ENCODE measurements at regions of chr1 and their contacts with region 1.

Region 1: GRCh38 chr1:244047621-244048471 is 3.2 kb upstream of the ZBTB18 start:
- DNase-seq: peak; percentile 99
- ATAC-seq: peak; percentile 75
- H3K4me3 ChIP-seq: peak overlapping the region; percentile 71 to 93 (median 82)
- H3K4me3 Mint-ChIP-seq: peak overlapping the region; percentile 94
- H3K27ac ChIP-seq: peak overlapping the region; percentile 99
- H3K27ac Mint-ChIP-seq: peak overlapping the region; percentile 99
- H3K4me1 ChIP-seq: peaks cover 25 to 38% of the 10 kb centered on the region in 2 donors
- H3K4me1 Mint-ChIP-seq: peaks cover 19% of the 10 kb centered on the region
- H3K27me3 ChIP-seq: no peaks in the 10 kb centered on the region
- H3K27me3 Mint-ChIP-seq: no peaks in the 10 kb centered on the region
- CTCF ChIP-seq: no peak

Region 2: DNA sequence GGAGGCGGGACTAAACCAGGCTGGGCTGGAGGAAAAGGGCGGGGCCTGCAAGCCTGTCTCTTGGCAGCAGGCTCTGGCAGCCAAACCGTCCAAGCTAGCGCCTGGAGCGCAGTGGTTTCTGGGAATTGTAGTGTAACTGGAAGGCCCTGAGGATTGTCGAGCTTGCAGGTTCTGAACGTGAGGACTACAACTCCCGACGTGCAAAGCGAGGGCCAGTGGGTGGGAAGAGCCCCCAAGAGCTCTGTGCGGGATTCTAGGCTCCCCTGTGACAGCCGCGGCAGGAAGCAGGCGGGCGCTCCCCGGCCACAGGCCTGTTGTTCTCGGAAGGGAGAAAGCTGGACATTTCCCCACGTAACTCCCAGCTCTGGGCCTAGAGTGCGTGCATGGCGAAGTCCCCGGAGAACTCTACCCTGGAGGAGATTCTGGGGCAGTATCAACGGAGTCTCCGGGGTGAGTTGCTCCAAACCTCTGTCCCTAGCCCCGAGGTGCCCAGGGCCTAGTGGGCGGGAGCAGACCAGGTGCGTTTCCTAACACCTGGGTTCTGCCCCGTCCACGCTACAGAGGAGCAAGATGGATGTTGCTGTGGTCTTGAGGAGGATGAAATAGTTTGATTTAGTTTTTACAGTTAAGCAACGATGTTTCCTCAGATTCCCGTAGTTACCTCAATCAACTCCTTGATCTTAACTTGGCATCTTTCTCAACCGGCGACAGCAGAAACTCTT is 791.9 kb before region 1 on chr1 and contains the start of gene SDCCAG8:
- CTCF ChIA-PET with region 1: no interaction called
- POLR2A ChIA-PET with region 1: interaction called, 5 read pairs
- intact Hi-C with region 1: loop called (anchors 1 kb)
- DNase-seq: peak; percentile 98
- ATAC-seq: peak; percentile 77
- H3K4me3 ChIP-seq: peak within 1 kb of the TSS; percentile 75 to 100 (median 94)
- H3K4me3 Mint-ChIP-seq: peak within 1 kb of the TSS; percentile 97
- H3K27ac ChIP-seq: peak within 1 kb of the TSS; percentile 97 to 99
- H3K27ac Mint-ChIP-seq: peak within 1 kb of the TSS; percentile 99
- H3K4me1 ChIP-seq: peaks cover 19 to 29% of the 10 kb centered on the region in 2 donors
- H3K4me1 Mint-ChIP-seq: peaks cover 45% of the 10 kb centered on the region
- H3K27me3 ChIP-seq: no peaks in the 10 kb centered on the region
- H3K27me3 Mint-ChIP-seq: no peaks in the 10 kb centered on the region
- CTCF ChIP-seq: no peak
- total RNA-seq, gene SDCCAG8: 60.7 and 64.8 TPM in 2 replicates

Region 3: GRCh38 chr1:243727503-243728203 is 320.2 kb before region 1 on chr1:
- CTCF ChIA-PET with region 1: no interaction called
- POLR2A ChIA-PET with region 1: interaction called, 5 read pairs
- intact Hi-C with region 1: loop called (anchors 5 kb)
- DNase-seq: peak; percentile 76
- ATAC-seq: peak; percentile 85
- H3K4me3 ChIP-seq: peak overlapping the region in 3 of 5 experiments; percentile 6 to 39 (median 8)
- H3K4me3 Mint-ChIP-seq: peak overlapping the region; percentile 58
- H3K27ac ChIP-seq: peak overlapping the region; percentile 74 to 78
- H3K27ac Mint-ChIP-seq: peak overlapping the region; percentile 89
- H3K4me1 ChIP-seq: peaks cover 30 to 35% of the 10 kb centered on the region in 2 donors
- H3K4me1 Mint-ChIP-seq: peaks cover 67% of the 10 kb centered on the region
- H3K27me3 ChIP-seq: no peaks in the 10 kb centered on the region
- H3K27me3 Mint-ChIP-seq: no peaks in the 10 kb centered on the region
- CTCF ChIP-seq: no peak

Region 4: GRCh38 chr1:244074559-244075171 is 26.8 kb after region 1 on chr1:
- CTCF ChIA-PET with region 1: interaction called, 9 read pairs
- POLR2A ChIA-PET with region 1: interaction called, 47 read pairs
- intact Hi-C with region 1: loop called (anchors 1 kb)
- DNase-seq: peak; percentile 79
- ATAC-seq: peak; percentile 72
- H3K4me3 ChIP-seq: peak overlapping the region; percentile 32 to 59 (median 52)
- H3K4me3 Mint-ChIP-seq: peak overlapping the region; percentile 87
- H3K27ac ChIP-seq: peak overlapping the region; percentile 78 to 81
- H3K27ac Mint-ChIP-seq: peak overlapping the region; percentile 94
- H3K4me1 ChIP-seq: peaks cover 52 to 56% of the 10 kb centered on the region in 2 donors
- H3K4me1 Mint-ChIP-seq: peaks cover 52% of the 10 kb centered on the region
- H3K27me3 ChIP-seq: no peaks in the 10 kb centered on the region
- H3K27me3 Mint-ChIP-seq: no peaks in the 10 kb centered on the region
- CTCF ChIP-seq: no peak

Region 5: DNA sequence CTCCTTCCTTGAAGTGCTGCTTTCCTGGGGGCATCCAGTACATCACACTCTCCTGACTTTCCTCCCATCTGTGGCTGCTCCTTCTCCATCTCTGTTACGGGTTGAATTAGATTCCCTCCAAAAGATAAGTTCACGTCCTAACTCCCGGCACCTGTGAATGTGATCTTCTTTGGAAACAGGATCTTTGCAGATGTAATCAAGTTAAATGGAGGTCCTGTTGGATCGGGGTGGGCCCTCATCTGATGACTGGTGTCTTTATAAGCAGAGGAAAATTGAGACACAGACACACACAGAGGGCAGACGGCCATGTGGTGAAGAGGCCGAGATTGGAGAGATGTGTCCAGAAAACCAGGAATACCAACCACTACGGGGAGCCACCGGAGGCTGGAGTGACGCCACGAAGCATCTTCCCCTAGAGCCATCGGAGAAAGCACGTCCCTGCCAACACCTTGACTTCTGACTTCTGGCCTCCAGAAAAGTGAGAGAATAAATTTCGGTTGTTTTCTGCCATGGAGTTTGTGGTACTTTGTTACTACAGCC is 39.2 kb after region 1 on chr1:
- CTCF ChIA-PET with region 1: no interaction called
- POLR2A ChIA-PET with region 1: no interaction called
- intact Hi-C with region 1: no loop called
- DNase-seq: no peak
- ATAC-seq: no peak
- H3K4me3 ChIP-seq: no peak overlapping the region
- H3K4me3 Mint-ChIP-seq: no peak overlapping the region
- H3K27ac ChIP-seq: no peak overlapping the region
- H3K27ac Mint-ChIP-seq: no peak overlapping the region
- H3K4me1 ChIP-seq: peaks cover 7 to 8% of the 10 kb centered on the region in 2 donors
- H3K4me1 Mint-ChIP-seq: peaks cover 11% of the 10 kb centered on the region
- H3K27me3 ChIP-seq: peaks cover 0 to 14% (median 4%) of the 10 kb centered on the region in 4 experiments
- H3K27me3 Mint-ChIP-seq: peaks cover 30% of the 10 kb centered on the region
- CTCF ChIP-seq: no peak

Region 6: DNA sequence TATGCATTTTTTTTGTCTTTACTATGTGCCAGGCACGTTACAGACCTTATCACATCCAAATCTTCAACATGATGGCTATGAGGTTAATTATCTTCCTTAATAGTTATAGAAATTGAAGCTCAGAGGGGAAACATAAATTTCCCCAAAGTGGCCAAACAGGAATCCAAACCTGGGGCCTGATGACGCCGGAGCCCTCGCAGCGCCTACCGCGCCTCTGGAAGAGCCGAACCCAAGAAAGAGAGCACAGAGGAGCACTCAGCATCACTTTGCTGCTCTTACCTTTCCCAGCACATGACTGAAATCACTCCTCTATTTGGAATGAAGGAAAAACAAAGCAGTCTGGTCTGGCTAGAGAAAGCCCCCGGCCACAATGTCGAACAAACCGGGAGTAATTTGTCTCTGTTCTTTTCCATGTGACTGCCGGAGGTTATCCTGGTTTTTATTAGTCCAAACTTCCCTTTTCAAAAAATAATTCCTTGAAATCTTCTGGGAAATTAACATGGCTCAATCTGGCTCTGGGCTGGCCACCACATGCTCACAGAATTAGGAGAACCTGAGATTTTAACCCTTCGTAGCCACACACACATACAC is 208.3 kb after region 1 on chr1:
- CTCF ChIA-PET with region 1: interaction called, 4 read pairs
- POLR2A ChIA-PET with region 1: interaction called, 4 read pairs
- intact Hi-C with region 1: loop called (anchors 1 kb)
- DNase-seq: no peak
- ATAC-seq: no peak
- H3K4me3 ChIP-seq: no peak overlapping the region
- H3K4me3 Mint-ChIP-seq: no peak overlapping the region
- H3K27ac ChIP-seq: no peak overlapping the region
- H3K27ac Mint-ChIP-seq: peak overlapping the region; percentile 37
- H3K4me1 ChIP-seq: peaks cover 43 to 52% of the 10 kb centered on the region in 2 donors
- H3K4me1 Mint-ChIP-seq: peaks cover 46% of the 10 kb centered on the region
- H3K27me3 ChIP-seq: no peaks in the 10 kb centered on the region
- H3K27me3 Mint-ChIP-seq: no peaks in the 10 kb centered on the region
- CTCF ChIP-seq: no peak

Region 7: GRCh38 chr1:244302889-244303613 is 255.2 kb after region 1 on chr1:
- CTCF ChIA-PET with region 1: no interaction called
- POLR2A ChIA-PET with region 1: interaction called, 4 read pairs
- intact Hi-C with region 1: loop called (anchors 1 kb)
- DNase-seq: no peak
- ATAC-seq: no peak
- H3K4me3 ChIP-seq: no peak overlapping the region
- H3K4me3 Mint-ChIP-seq: no peak overlapping the region
- H3K27ac ChIP-seq: no peak overlapping the region
- H3K27ac Mint-ChIP-seq: no peak overlapping the region
- H3K4me1 ChIP-seq: peaks cover 4 to 17% of the 10 kb centered on the region in 2 donors
- H3K4me1 Mint-ChIP-seq: peaks cover 10% of the 10 kb centered on the region
- H3K27me3 ChIP-seq: no peaks in the 10 kb centered on the region
- H3K27me3 Mint-ChIP-seq: no peaks in the 10 kb centered on the region
- CTCF ChIP-seq: no peak

Region 8: GRCh38 chr1:244652699-244653466 is 605.0 kb after region 1 on chr1 and contains the start of gene DESI2:
- CTCF ChIA-PET with region 1: no interaction called
- POLR2A ChIA-PET with region 1: no interaction called
- intact Hi-C with region 1: loop called (anchors 2 kb)
- DNase-seq: peak; percentile 99
- ATAC-seq: peak; percentile 87
- H3K4me3 ChIP-seq: peak within 1 kb of the TSS; percentile 51 to 91 (median 81)
- H3K4me3 Mint-ChIP-seq: no peak within 1 kb of the TSS
- H3K27ac ChIP-seq: peak within 1 kb of the TSS; percentile 64 to 88
- H3K27ac Mint-ChIP-seq: peak within 1 kb of the TSS; percentile 93
- H3K4me1 ChIP-seq: peaks cover 23 to 24% of the 10 kb centered on the region in 2 donors
- H3K4me1 Mint-ChIP-seq: peaks cover 20% of the 10 kb centered on the region
- H3K27me3 ChIP-seq: no peaks in the 10 kb centered on the region
- H3K27me3 Mint-ChIP-seq: no peaks in the 10 kb centered on the region
- CTCF ChIP-seq: peak; percentile 65
- total RNA-seq, gene DESI2: 25.2 and 25.9 TPM in 2 replicates